ENCODE measurements at regions of chr19 and their contacts with region 1.

Region 1: GRCh38 chr19:13774217-13775191 is at the start of gene C19orf53:
- DNase-seq: peak; percentile 73 to 93 (median 84)
- ATAC-seq: peak; percentile 89 to 91
- H3K4me3 Mint-ChIP-seq: peak within 1 kb of the TSS; percentile 98 to 100 (median 100)
- H3K27ac Mint-ChIP-seq: peak within 1 kb of the TSS; percentile 96 to 100 (median 99)
- H3K4me1 Mint-ChIP-seq: peaks cover 18 to 44% (median 30%) of the 10 kb centered on the region in 4 donors
- H3K27me3 Mint-ChIP-seq: no peaks in the 10 kb centered on the region
- polyA plus RNA-seq, gene C19orf53: 248 to 324 (median 278) TPM

Region 2: DNA sequence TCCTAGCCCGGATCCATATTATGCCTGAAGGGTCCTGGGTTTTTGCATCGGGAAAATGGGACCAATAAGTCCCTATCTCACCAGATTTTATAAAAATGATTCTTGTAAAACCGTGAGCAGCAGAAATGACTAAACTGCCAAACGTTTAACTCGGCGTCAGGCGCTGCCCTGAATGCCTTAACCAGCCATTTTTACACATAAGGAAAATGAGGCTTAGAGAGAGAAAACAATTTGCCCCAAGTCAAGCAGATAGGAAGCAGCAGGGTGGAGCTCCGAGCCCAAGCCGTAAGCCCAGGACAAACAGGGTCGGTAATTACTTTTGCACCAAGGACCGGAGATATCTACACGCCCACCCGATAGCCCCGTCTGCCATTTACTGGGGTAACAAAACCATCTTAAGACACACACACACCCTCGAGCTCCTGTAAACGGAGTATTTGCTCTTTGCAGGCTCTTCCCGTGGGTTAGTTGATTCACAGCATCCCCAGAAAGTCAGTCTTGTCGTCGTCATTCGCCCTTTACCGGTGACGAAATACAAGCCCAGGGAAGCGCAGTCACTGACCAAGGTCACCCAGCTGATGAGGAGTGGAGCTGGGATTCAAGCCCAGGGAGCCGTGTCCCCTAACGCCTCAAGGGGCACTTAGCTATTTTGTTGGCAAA is 26.2 kb before region 1 on chr19:
- POLR2A ChIA-PET with region 1: interaction called, 29 read pairs
- DNase-seq: peak in 1 of 10 donors; percentile 28
- ATAC-seq: peak; percentile 13 to 28
- H3K4me3 Mint-ChIP-seq: peak overlapping the region; percentile 86 to 92 (median 90)
- H3K27ac Mint-ChIP-seq: peak overlapping the region; percentile 84 to 98 (median 94)
- H3K4me1 Mint-ChIP-seq: peaks cover 10 to 44% (median 30%) of the 10 kb centered on the region in 4 donors
- H3K27me3 Mint-ChIP-seq: no peaks in the 10 kb centered on the region

Region 3: GRCh38 chr19:13764101-13764807 is 10.2 kb before region 1 on chr19 and contains the start of gene MRI1:
- POLR2A ChIA-PET with region 1: interaction called, 18 read pairs
- DNase-seq: peak; percentile 36 to 78 (median 60)
- ATAC-seq: peak; percentile 84 to 88
- H3K4me3 Mint-ChIP-seq: peak within 1 kb of the TSS; percentile 84 to 95 (median 90)
- H3K27ac Mint-ChIP-seq: peak within 1 kb of the TSS; percentile 49 to 96 (median 90)
- H3K4me1 Mint-ChIP-seq: peaks cover 12 to 22% (median 18%) of the 10 kb centered on the region in 4 donors
- H3K27me3 Mint-ChIP-seq: no peaks in the 10 kb centered on the region
- polyA plus RNA-seq, gene MRI1: 6.4 to 15.5 (median 11.6) TPM

Region 4: GRCh38 chr19:13846557-13847406 is 72.3 kb after region 1 on chr19:
- POLR2A ChIA-PET with region 1: interaction called, 17 read pairs
- DNase-seq: peak; percentile 88 to 100 (median 98)
- ATAC-seq: peak; percentile 62 to 75
- H3K4me3 Mint-ChIP-seq: peak overlapping the region; percentile 84 to 94 (median 91)
- H3K27ac Mint-ChIP-seq: peak overlapping the region; percentile 99 to 100 (median 100)
- H3K4me1 Mint-ChIP-seq: peaks cover 26 to 72% (median 56%) of the 10 kb centered on the region in 4 donors
- H3K27me3 Mint-ChIP-seq: peaks cover 0 to 4% (median 0%) of the 10 kb centered on the region in 5 donors

Region 5: DNA sequence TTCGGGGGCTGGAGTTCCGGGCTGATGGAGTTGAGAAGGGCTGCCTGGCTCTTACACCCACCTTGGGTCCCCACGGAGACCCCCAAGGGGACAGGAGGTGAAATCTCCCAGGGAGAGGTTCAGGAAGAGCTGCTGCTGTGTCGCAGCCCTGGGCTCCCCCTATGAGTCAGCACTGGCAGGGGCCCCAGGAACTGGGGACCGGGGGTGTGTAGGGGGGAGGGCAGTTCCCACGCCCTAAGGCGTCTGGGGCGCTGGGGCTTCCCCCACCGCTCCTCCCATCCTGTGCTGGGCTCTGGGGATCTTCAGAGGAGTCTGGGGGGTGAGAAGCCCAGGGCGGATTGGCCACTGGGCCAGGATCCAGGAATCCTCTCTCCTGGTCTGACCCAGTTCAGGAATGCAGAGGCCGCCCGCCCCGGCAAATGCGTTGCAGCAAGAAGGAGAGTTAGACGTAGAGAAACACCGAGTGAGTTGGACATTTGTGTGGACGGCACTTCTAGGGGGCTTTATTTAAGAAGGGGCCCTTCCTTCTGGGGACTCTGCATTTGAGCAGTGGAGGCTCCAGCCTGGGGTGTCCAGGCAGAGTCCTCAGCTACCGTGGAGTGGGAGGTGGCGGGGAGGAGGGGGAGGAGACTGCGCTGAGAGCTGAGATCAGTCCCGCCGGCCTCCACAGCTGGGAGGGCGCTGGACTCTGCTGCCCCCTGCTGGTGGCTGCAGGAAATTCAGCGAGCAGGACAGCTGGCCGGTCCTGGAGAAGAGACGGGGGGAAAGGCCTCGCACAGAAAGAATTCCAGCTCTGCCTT is 87.4 kb after region 1 on chr19:
- POLR2A ChIA-PET with region 1: interaction called, 15 read pairs
- DNase-seq: peak; percentile 70 to 91 (median 86)
- ATAC-seq: peak; percentile 81 to 86
- H3K4me3 Mint-ChIP-seq: peak overlapping the region; percentile 87 to 97 (median 92)
- H3K27ac Mint-ChIP-seq: peak overlapping the region; percentile 84 to 99 (median 96)
- H3K4me1 Mint-ChIP-seq: peaks cover 21 to 43% (median 40%) of the 10 kb centered on the region in 4 donors
- H3K27me3 Mint-ChIP-seq: peaks cover 8 to 24% (median 20%) of the 10 kb centered on the region in 5 donors

Measured in naive thymus-derived CD8-positive, alpha-beta T cell (primary cell).